ENCODE measurements at regions of chr9 and their contacts with region 1.

Region 1: DNA sequence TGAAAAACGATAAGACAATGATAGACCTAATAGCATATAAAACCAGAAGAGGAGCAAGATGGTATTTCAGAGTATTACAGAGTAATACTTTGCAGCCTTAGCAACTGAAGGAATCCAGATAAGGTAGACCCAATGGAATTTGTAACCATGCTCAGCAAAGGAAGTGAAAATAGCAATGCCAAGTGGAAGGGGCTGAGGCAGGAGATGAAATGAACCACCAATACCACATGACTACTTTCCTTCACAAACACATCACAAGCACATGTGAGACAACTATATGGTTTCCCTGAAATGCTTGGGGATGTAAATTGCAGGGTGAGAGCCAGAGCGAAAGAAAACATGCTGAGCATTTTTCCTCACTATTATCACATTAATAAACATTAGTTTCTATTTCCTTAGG is 79.8 kb upstream of the MELK start:
- DNase-seq: no peak
- H3K4me3 Mint-ChIP-seq: peak overlapping the region; percentile 55
- H3K27ac Mint-ChIP-seq: peak overlapping the region; percentile 79
- H3K4me1 Mint-ChIP-seq: peaks cover 55% of the 10 kb centered on the region
- H3K27me3 Mint-ChIP-seq: no peaks in the 10 kb centered on the region

Region 2: GRCh38 chr9:36503172-36504088 is 10.6 kb after region 1 on chr9:
- intact Hi-C with region 1: loop called (anchors 1 kb)
- DNase-seq: no peak
- H3K4me3 Mint-ChIP-seq: no peak overlapping the region
- H3K27ac Mint-ChIP-seq: peak overlapping the region; percentile 1
- H3K4me1 Mint-ChIP-seq: peaks cover 19% of the 10 kb centered on the region
- H3K27me3 Mint-ChIP-seq: peaks cover 3% of the 10 kb centered on the region

Region 3: DNA sequence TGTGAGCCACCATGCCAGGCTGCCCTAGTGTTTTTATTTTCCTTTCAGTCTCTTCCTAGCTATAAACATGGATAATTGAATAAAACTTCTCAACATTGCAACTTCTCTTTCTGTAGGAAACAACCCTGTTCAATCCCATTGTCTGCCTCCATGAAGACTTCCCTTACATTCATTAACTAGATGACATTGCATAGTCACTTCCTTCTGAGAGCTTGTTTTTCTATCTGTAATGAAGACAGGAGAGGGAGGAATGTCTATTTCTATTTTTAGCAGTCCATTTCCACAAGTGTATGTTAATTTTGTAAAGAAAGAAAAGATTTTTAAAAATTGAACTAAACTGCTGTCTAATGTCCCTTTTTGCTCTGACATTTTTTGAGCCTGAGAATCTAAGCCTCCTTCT is 24.3 kb after region 1 on chr9:
- intact Hi-C with region 1: no loop called
- DNase-seq: no peak
- H3K4me3 Mint-ChIP-seq: no peak overlapping the region
- H3K27ac Mint-ChIP-seq: no peak overlapping the region
- H3K4me1 Mint-ChIP-seq: no peaks in the 10 kb centered on the region
- H3K27me3 Mint-ChIP-seq: peaks cover 8% of the 10 kb centered on the region

Region 4: DNA sequence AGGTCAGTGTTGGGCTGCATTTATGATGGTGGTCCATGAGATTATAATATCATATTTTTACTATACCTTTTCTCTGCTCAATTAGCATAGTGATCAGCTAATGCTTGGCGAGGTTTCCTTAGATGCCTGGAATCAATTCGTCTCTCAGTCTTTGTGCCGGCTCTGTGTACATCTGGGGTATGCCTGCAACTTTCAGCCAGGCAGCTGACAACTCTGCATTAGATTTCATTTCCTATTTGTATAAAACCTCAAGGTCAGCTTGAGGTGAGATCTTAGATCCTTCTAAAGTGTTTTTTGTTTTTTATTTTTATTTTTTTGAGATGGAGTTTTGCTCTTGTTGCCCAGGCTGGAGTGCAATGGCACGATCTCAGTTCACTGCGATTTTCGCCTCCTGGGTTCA is 166.6 kb after region 1 on chr9:
- intact Hi-C with region 1: no loop called
- DNase-seq: no peak
- H3K4me3 Mint-ChIP-seq: no peak overlapping the region
- H3K27ac Mint-ChIP-seq: no peak overlapping the region
- H3K4me1 Mint-ChIP-seq: peaks cover 4% of the 10 kb centered on the region
- H3K27me3 Mint-ChIP-seq: no peaks in the 10 kb centered on the region

Region 5: GRCh38 chr9:36698984-36699383 is 206.1 kb after region 1 on chr9:
- intact Hi-C with region 1: no loop called
- DNase-seq: no peak
- H3K4me3 Mint-ChIP-seq: no peak overlapping the region
- H3K27ac Mint-ChIP-seq: no peak overlapping the region
- H3K4me1 Mint-ChIP-seq: no peaks in the 10 kb centered on the region
- H3K27me3 Mint-ChIP-seq: peaks cover 4% of the 10 kb centered on the region

Measured in activated T-helper 1 cell treated with anti-CD3 and anti-CD28 coated beads, Interleukin-12 subunit alpha, Interleukin-12 subunit beta, Interleukin-2, Interleukin-4 antibody, amounts not matched to agents 30 ng/mL and 10 ng/mL and 1 ng/mL, durations not matched to agents 14 hours and 24 hours and 36 hours (primary cell).